Activated T-helper 2 cell treated with anti-CD3 and anti-CD28 coated beads, Interferon-gamma antibody, Interleukin-2, Interleukin-4, amounts not matched to agents 10 μg/mL and 5 μg/mL and 100 μg/mL, durations not matched to agents 14 hours and 24 hours and 36 hours (primary cell): ENCODE measurements at regions of chr3 and their contacts with region 1.

Region 1: DNA sequence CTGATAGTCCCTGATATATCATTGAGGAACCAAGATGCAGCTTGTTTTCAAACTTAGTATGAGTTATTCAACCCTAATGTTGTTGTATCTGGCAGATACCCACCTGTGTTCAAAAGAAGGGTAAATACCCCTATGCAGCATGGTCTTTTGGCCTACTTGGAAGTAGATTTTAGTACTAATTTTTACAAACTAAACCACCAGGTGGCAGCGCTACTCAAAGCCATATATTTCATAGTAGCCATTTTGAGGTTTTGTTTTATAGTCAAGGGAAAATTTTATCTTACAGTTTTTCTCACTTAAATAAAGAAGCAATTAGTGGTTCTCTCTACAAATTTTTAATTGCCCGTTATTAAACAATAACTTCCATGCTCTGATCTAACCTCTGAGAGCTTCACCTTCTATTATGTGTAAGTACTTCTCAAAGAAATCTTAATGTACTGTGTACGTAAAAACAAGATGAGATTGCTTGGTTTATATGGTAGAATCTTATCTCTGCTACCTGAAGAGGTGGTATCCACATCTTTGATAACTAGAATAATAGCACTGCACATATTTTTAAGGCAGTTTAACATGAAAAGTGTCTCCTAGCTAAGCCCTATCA is 31.5 kb upstream of the MLF1 start:
- DNase-seq: no peak
- H3K4me3 Mint-ChIP-seq: no peak overlapping the region
- H3K27ac Mint-ChIP-seq: no peak overlapping the region
- H3K4me1 Mint-ChIP-seq: no peaks in the 10 kb centered on the region
- H3K27me3 Mint-ChIP-seq: no peaks in the 10 kb centered on the region

Region 2: DNA sequence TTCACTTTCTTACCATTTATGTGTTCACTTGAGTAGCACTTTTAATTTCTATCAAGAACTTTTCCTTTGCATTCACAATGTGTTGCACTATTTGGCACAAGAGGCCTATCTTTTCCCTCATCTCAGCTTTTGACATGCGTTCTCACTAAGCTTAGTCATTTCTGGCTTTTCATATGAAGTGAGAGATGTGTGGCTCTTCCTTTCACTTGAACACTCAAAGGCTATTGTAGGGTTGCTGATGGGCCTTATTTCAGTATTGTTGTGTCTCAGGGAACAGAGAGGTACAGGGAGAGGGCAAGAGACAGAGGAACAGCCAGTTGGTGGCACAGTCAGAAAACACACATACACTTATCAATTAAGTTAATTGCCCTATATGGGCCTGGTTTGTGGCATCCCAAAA is 95.9 kb before region 1 on chr3:
- intact Hi-C with region 1: loop called (anchors 5 kb)
- DNase-seq: peak; percentile 12
- H3K4me3 Mint-ChIP-seq: no peak overlapping the region
- H3K27ac Mint-ChIP-seq: peak overlapping the region; percentile 47
- H3K4me1 Mint-ChIP-seq: peaks cover 19% of the 10 kb centered on the region
- H3K27me3 Mint-ChIP-seq: no peaks in the 10 kb centered on the region